Common myeloid progenitor, CD34-positive (primary cell): ENCODE measurements at regions of chr12 and their contacts with region 1.

Region 1: DNA sequence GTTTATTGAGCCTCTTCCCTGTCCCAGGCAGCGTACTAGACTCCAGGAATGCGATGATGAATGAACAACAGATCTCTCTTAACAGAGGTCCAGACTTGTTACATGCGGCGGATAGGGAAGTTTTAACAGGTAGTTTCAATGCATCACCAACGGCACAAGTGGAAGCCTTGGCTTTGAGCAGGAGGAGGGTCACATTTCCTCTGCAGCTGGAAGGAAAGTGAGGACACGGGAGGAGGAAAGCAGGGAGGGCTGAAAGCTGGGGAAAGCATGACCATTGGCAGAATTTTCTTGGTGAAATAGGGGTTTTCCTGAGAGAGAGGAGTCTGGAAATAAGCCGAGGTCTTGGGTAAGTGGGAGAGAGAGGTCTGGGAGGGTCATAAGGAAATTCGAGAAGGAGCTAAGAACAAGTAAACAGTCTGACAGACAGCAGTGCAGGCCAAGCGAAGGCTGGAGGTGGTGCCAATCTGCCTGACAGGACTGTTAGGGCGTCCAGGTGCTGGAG is 15.4 kb downstream of the BHLHE41 start:
- DNase-seq: no peak
- H3K4me3 ChIP-seq: no peak overlapping the region
- H3K27ac ChIP-seq: no peak overlapping the region
- H3K4me1 ChIP-seq: peaks cover 4 to 12% (median 8%) of the 10 kb centered on the region in 4 experiments
- H3K27me3 ChIP-seq: no peaks in the 10 kb centered on the region

Region 2: DNA sequence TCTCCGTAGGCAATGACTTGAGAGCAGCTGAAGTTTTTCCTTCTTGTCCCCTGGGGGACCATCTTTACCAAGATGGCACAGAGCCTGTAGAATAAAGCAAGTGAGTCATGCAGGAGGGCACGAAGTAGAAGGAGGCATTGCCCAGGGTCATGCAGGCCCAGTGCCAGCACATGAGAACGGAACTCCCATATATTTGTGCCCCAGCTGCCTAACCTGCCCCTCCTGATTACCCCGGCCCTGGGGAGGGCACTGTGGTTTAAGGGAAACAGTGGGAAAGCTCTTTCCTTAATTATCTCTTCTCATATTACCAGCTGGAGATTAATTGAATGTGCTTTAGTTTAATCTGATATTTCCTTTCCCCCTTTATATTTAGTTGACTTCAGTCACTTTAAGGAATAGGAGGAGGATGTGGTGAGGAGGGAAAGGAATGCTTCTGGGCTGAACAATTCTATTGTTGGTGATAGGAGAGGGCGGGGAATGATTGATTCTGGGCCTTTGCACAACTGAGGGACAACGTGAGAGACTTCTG is 99.0 kb before region 1 on chr12:
- CTCF ChIA-PET with region 1: no interaction called
- POLR2A ChIA-PET with region 1: no interaction called
- DNase-seq: no peak
- H3K4me3 ChIP-seq: no peak overlapping the region
- H3K27ac ChIP-seq: no peak overlapping the region
- H3K4me1 ChIP-seq: no peaks in the 10 kb centered on the region
- H3K27me3 ChIP-seq: no peaks in the 10 kb centered on the region

Region 3: GRCh38 chr12:26097046-26097878 is 12.1 kb before region 1 on chr12:
- CTCF ChIA-PET with region 1: interaction called, 13 read pairs
- POLR2A ChIA-PET with region 1: no interaction called
- DNase-seq: peak; percentile 69 to 80 (median 76)
- H3K4me3 ChIP-seq: no peak overlapping the region
- H3K27ac ChIP-seq: no peak overlapping the region
- H3K4me1 ChIP-seq: peaks cover 0 to 7% (median 0%) of the 10 kb centered on the region in 4 experiments
- H3K27me3 ChIP-seq: no peaks in the 10 kb centered on the region

Region 4: GRCh38 chr12:26274441-26275312 is 165.3 kb after region 1 on chr12:
- CTCF ChIA-PET with region 1: no interaction called
- POLR2A ChIA-PET with region 1: no interaction called
- DNase-seq: peak; percentile 97 to 99 (median 99)
- H3K4me3 ChIP-seq: peak overlapping the region in 2 of 7 experiments; percentile 17 to 31
- H3K27ac ChIP-seq: peak overlapping the region; percentile 74 to 80
- H3K4me1 ChIP-seq: peaks cover 6 to 79% (median 43%) of the 10 kb centered on the region in 4 experiments
- H3K27me3 ChIP-seq: no peaks in the 10 kb centered on the region